ENCODE measurements at regions of chr1 and their contacts with region 1.

Region 1: DNA sequence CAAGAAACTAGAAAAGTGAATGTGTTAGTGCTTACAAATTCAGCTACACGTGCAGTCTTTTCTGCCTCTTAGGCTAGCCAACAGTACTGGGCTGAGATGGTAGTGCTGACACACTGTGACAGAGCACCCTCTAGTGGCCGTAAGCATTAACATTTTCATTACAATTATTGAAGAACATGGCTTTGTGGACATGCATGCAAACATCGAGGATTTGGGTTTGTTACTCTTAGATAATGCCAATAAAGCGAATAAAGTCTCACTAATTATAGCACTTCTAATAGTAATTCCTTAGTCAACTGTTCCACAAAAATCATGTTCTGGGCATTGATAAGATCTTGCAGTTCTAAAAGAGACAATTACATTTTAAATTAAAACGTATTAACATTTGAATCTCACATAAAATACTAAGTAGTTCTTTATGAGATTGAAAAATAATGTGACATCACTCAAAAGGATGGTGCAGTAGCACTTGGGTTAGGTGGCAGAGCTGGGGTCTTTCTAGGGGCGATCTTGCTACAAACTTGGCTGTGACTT is 47.1 kb downstream of the MYSM1 start:
- DNase-seq: peak; percentile 84
- ATAC-seq: peak; percentile 94
- H3K4me3 ChIP-seq: no peak overlapping the region
- H3K27ac ChIP-seq: no peak overlapping the region
- H3K4me1 ChIP-seq: no peaks in the 10 kb centered on the region
- H3K27me3 ChIP-seq: no peaks in the 10 kb centered on the region
- CTCF ChIP-seq: peak; percentile 92
- POLR2A ChIP-seq: no peak
- RAD21 ChIP-seq: peak; percentile 94

Region 2: GRCh38 chr1:58515794-58516401 is 136.8 kb before region 1 on chr1:
- CTCF ChIA-PET with region 1: interaction called, 18 read pairs
- POLR2A ChIA-PET with region 1: no interaction called
- dilution Hi-C with region 1: no loop called
- in situ Hi-C with region 1: loop called (anchors 5 kb)
- intact Hi-C with region 1: loop called (anchors 1 kb)
- DNase-seq: peak; percentile 85
- ATAC-seq: peak; percentile 79
- H3K4me3 ChIP-seq: no peak overlapping the region
- H3K27ac ChIP-seq: no peak overlapping the region
- H3K4me1 ChIP-seq: no peaks in the 10 kb centered on the region
- H3K27me3 ChIP-seq: no peaks in the 10 kb centered on the region
- CTCF ChIP-seq: peak; percentile 85
- POLR2A ChIP-seq: no peak
- RAD21 ChIP-seq: peak; percentile 86

Region 3: GRCh38 chr1:58584082-58584895 is 68.4 kb before region 1 on chr1:
- CTCF ChIA-PET with region 1: interaction called, 3 read pairs
- POLR2A ChIA-PET with region 1: no interaction called
- dilution Hi-C with region 1: no loop called
- in situ Hi-C with region 1: no loop called
- intact Hi-C with region 1: loop called (anchors 2 kb)
- DNase-seq: peak; percentile 96
- ATAC-seq: peak; percentile 82
- H3K4me3 ChIP-seq: no peak overlapping the region
- H3K27ac ChIP-seq: peak overlapping the region; percentile 98
- H3K4me1 ChIP-seq: peaks cover 22% of the 10 kb centered on the region
- H3K27me3 ChIP-seq: no peaks in the 10 kb centered on the region
- CTCF ChIP-seq: no peak
- POLR2A ChIP-seq: no peak
- RAD21 ChIP-seq: no peak